GM12878 (cell line): ENCODE measurements at regions of chr20 and their contacts with region 1.

Region 1: DNA sequence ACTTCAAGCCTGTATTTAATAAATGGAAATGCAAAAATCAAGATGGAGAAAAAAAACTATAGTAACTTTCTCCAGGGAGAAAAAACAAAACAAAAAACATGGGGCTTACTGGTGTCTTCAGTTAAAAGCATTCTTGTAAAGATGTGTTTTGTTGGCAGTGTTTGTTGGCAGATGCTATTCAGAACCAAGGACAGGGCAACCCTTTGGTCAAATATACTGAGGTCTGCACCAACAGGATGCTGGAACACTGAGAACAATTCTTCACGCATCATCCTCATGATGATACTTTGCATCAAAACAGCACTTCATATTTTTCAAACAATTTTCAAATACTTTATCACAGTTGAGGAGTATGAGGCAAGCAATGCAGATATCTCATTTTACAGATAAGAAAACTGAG is 63.7 kb upstream of the CBLN4 start:
- DNase-seq: no peak
- ATAC-seq: no peak
- H3K4me3 ChIP-seq: no peak overlapping the region
- H3K27ac ChIP-seq: no peak overlapping the region
- H3K4me1 ChIP-seq: no peaks in the 10 kb centered on the region
- H3K27me3 ChIP-seq: no peaks in the 10 kb centered on the region
- CTCF ChIP-seq: no peak
- EP300 ChIP-seq: no peak
- POLR2A ChIP-seq: no peak
- RAD21 ChIP-seq: no peak

Region 2: DNA sequence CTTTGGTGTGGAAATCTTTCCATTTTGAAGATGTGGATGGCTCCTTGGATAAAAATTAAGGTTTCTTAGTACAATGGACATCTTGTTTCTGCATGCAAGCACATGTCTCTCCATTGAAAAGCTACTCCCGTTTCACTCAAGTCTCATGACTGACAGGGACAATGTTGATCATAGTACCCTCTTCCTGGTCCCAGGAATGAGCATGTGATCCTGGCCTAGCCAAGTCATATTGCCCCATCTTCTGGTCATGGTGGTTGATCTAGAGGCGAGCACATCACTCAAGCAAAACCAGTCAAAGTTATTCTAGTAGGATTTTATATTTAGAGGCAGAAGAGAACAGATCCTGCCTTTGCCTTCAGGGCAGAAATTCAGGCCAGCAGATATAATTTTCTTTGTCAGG is 51.5 kb before region 1 on chr20:
- CTCF ChIA-PET with region 1: no interaction called
- POLR2A ChIA-PET with region 1: no interaction called
- RAD21 ChIA-PET with region 1: no interaction called
- SMC1A ChIA-PET with region 1: no interaction called
- in situ Hi-C with region 1: no loop called
- intact Hi-C with region 1: no loop called
- DNase-seq: no peak
- ATAC-seq: no peak
- H3K4me3 ChIP-seq: no peak overlapping the region
- H3K27ac ChIP-seq: no peak overlapping the region
- H3K4me1 ChIP-seq: no peaks in the 10 kb centered on the region
- H3K27me3 ChIP-seq: no peaks in the 10 kb centered on the region
- CTCF ChIP-seq: no peak
- EP300 ChIP-seq: no peak
- POLR2A ChIP-seq: no peak
- RAD21 ChIP-seq: no peak

Region 3: DNA sequence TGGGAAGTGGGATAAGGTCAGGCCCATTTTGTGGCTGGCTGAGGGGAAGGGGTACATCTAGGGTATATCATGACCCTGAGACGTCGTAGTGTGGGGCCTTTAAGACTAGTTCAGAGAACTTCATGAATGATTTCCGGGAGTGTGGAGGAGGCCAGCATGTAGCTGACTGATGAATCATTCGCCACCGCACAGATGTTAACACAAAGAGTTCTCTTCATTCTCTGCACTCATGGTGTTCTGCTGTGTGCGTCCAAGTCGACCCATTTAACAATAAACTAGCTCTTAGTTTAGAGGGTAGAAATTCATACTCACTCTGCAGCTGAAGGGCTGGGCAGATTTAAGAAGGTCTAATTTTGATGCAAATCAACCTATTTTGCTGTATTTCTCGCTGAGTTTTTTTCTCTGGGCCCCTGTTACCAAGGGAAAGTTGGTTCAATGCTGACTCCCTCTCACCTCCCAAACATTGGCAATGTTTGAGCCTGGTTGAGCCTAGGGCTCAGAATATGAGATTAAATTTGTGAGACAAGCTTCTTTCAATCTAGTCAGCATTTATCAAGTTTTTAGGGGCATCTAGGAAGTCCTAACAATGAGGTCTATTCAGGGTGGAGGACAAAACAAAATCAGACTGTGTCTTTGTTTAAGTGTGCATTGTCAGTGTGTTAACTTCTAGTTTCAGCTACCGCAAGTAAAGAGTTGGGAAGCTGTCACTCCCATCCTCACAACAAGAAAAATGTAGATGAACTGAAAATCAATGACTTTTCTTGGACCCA is 43.1 kb after region 1 on chr20:
- CTCF ChIA-PET with region 1: no interaction called
- POLR2A ChIA-PET with region 1: no interaction called
- RAD21 ChIA-PET with region 1: no interaction called
- SMC1A ChIA-PET with region 1: no interaction called
- in situ Hi-C with region 1: no loop called
- intact Hi-C with region 1: loop called (anchors 5 kb)
- DNase-seq: no peak
- ATAC-seq: no peak
- H3K4me3 ChIP-seq: no peak overlapping the region
- H3K27ac ChIP-seq: no peak overlapping the region
- H3K4me1 ChIP-seq: no peaks in the 10 kb centered on the region
- H3K27me3 ChIP-seq: no peaks in the 10 kb centered on the region
- CTCF ChIP-seq: no peak
- EP300 ChIP-seq: no peak
- POLR2A ChIP-seq: no peak
- RAD21 ChIP-seq: no peak

Region 4: GRCh38 chr20:56157530-56158203 is 88.7 kb after region 1 on chr20:
- CTCF ChIA-PET with region 1: no interaction called
- POLR2A ChIA-PET with region 1: no interaction called
- RAD21 ChIA-PET with region 1: no interaction called
- SMC1A ChIA-PET with region 1: no interaction called
- in situ Hi-C with region 1: no loop called
- intact Hi-C with region 1: no loop called
- DNase-seq: no peak
- ATAC-seq: no peak
- H3K4me3 ChIP-seq: no peak overlapping the region
- H3K27ac ChIP-seq: no peak overlapping the region
- H3K4me1 ChIP-seq: no peaks in the 10 kb centered on the region
- H3K27me3 ChIP-seq: no peaks in the 10 kb centered on the region
- CTCF ChIP-seq: no peak
- EP300 ChIP-seq: no peak
- POLR2A ChIP-seq: no peak
- RAD21 ChIP-seq: no peak